ENCODE measurements at regions of chr4 and their contacts with region 1.

Region 1: GRCh38 chr4:24991015-24991414 is 39.7 kb downstream of the LGI2 start:
- DNase-seq: no peak

Region 2: GRCh38 chr4:23789766-23790165 is 1201.2 kb before region 1 on chr4:
- intact Hi-C with region 1: no loop called
- DNase-seq: peak; percentile 94

Region 3: DNA sequence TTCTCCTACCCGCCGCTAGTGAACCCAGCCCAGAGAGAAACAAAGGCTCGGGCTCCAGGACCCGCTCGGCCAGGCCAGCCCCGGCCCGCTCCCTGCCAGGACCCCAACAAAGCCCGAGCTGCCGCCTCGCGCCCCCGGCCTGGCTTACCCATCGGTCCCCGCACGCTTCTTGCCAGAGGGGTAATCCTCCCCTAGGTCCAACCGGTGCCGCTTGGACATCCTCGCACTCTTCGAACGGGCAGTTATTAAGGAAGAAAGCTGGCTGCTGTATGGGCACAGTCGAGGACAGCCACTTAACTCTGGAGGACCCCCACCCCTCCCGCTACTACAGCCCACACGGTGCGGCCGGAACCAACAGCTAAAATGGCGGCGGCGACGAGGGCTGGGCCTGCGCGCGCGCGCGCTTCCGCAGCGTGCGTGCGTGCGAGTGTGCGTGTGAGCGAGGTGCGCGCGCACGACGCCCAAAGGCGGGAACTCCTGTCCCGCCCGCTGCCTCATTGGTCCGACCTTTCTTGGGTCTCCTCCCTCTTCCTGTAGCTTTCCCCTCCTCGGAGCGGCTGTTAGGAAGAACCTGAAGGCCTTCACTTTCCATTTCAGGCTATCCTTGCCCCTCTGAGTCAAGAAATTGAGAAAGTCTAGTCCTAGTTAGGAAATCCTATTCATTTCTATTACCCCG is 406.7 kb before region 1 on chr4 and contains the start of gene DHX15:
- intact Hi-C with region 1: loop called in 1 of 2 experiments (anchors 10 kb)
- DNase-seq: peak; percentile 99
- total RNA-seq, gene DHX15: 81.7 to 99.2 TPM

Region 4: GRCh38 chr4:25020236-25020635 is 29.2 kb after region 1 on chr4:
- intact Hi-C with region 1: no loop called
- DNase-seq: no peak